ENCODE measurements at regions of chr10 and their contacts with region 1.

Region 1: GRCh38 chr10:132023092-132023811 is 41.5 kb upstream of the BNIP3 start:
- DNase-seq: peak; percentile 73 to 94
- H3K4me3 ChIP-seq: no peak overlapping the region
- H3K27ac ChIP-seq: no peak overlapping the region
- H3K4me1 ChIP-seq: peaks cover 2 to 8% (median 3%) of the 10 kb centered on the region in 4 experiments; a peak in 5 of 7 replicates
- H3K27me3 ChIP-seq: peaks cover 0 to 8% (median 1%) of the 10 kb centered on the region in 4 experiments; a peak in 3 of 7 replicates
- CTCF ChIP-seq: peak; percentile 85 to 93 (median 89)
- EP300 ChIP-seq: no peak
- POLR2A ChIP-seq: no peak
- RAD21 ChIP-seq: peak; percentile 93 to 95

Region 2: DNA sequence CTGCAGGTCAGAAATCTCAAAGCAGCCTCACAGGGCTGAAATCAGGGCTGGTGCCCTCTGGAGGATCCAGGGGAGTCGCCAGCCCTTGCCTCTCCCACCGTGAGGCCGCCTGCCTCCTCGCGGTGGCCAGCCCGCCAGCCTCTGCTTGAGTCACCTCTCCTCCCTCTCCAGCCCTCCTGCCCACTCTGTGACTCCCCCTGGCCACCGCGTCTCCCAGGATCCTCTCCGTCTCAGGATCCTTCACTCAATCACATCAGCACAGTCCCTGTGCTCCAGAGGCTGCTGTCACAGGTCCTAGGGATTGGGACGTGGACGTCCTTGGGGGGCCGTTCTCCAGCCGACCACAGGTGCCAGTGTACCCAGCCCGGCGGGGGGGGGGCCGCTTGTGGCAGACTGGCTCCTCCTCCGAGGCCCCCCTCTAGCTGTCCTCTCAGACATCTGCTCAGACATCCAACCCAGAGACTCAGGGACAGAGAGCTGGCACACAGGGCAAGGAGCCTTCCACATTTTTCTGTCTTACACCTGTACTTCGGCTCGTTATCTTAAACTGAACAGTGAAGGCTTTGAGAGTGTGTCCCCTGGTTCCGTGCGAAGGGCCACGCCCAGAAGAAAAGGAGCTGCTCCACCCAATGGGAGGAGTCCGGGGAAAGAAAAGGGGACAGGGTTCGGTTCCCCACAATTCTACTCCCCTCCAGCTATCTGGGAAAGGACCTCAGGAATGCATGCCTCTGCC is 131.9 kb before region 1 on chr10:
- CTCF ChIA-PET with region 1: interaction called, 11 read pairs
- POLR2A ChIA-PET with region 1: interaction called, 4 read pairs
- DNase-seq: peak; percentile 15 to 76
- H3K4me3 ChIP-seq: peak overlapping the region in 1 of 4 experiments; percentile 41; a peak in 2 of 8 replicates
- H3K27ac ChIP-seq: no peak overlapping the region
- H3K4me1 ChIP-seq: peaks cover 0 to 7% (median 4%) of the 10 kb centered on the region in 4 experiments; a peak in 5 of 7 replicates
- H3K27me3 ChIP-seq: peaks cover 0 to 3% (median 0%) of the 10 kb centered on the region in 4 experiments; a peak in 1 of 7 replicates
- CTCF ChIP-seq: peak; percentile 36 to 67 (median 65)
- EP300 ChIP-seq: no peak
- POLR2A ChIP-seq: no peak
- RAD21 ChIP-seq: no peak; a peak in 1 of 4 replicates

Region 3: DNA sequence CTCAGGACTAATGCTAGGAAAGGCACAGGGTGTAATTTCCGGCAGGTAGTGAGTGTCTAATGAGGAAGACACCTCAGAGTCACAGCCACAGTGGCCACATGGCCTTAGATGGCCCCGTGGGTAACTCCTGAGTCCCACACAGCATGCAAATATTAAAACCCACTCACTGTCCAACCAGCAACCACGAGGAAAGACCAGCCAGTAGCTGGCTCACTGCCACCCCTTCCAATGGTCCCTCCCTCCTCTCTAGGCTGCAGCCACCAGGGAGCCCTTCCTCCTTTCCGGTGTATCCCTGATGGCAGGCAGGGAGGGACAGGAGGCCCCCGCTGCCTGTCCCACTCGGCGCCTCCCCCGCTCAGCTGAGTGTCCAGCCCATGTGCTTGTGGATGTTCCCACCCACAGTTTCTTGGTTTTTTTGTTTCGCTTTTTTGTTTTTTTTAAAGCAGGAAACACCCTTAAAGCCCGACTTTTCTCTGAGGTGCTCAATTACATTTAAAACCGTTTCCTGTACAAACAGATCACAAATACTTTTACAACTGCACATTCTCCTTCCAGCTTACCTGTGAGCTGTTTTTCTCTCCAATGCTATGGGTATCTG is 50.7 kb before region 1 on chr10:
- CTCF ChIA-PET with region 1: interaction called, 16 read pairs
- POLR2A ChIA-PET with region 1: interaction called, 3 read pairs
- DNase-seq: no peak
- H3K4me3 ChIP-seq: no peak overlapping the region
- H3K27ac ChIP-seq: no peak overlapping the region
- H3K4me1 ChIP-seq: 0 out of 7 replicates have a peak, but pooled peaks cover 0 to under 1% (median 0%) of the 10 kb centered on the region in 4 experiments
- H3K27me3 ChIP-seq: no peaks in the 10 kb centered on the region; a peak in 1 of 7 replicates
- CTCF ChIP-seq: no peak
- EP300 ChIP-seq: no peak
- POLR2A ChIP-seq: no peak
- RAD21 ChIP-seq: no peak

Region 4: DNA sequence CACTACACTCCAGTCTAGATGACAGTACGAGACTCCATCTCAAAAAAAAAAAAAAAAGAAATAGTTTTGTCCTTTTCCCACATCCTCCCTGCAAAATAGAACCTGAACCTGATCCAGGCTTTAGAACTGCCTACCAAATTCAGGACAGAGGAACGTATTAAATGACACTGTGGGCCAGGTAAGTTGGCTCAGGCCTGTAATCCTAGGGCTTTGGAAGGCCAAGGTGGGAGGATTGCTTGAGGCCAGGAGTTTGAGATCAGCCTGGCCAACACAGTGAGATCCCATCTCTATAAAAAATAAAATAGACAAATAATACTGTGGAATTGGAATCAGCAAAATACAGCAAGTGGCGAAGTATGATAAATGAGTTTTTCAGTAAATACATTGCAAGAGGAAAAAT is 31.5 kb before region 1 on chr10:
- CTCF ChIA-PET with region 1: interaction called, 86 read pairs
- POLR2A ChIA-PET with region 1: interaction called, 5 read pairs
- DNase-seq: no peak
- H3K4me3 ChIP-seq: no peak overlapping the region
- H3K27ac ChIP-seq: no peak overlapping the region
- H3K4me1 ChIP-seq: no peaks in the 10 kb centered on the region; a peak in 2 of 7 replicates
- H3K27me3 ChIP-seq: no peaks in the 10 kb centered on the region
- CTCF ChIP-seq: no peak
- EP300 ChIP-seq: no peak
- POLR2A ChIP-seq: no peak
- RAD21 ChIP-seq: no peak

Region 5: GRCh38 chr10:132011024-132011423 is 12.2 kb before region 1 on chr10:
- CTCF ChIA-PET with region 1: interaction called, 59 read pairs
- POLR2A ChIA-PET with region 1: interaction called, 7 read pairs
- DNase-seq: no peak
- H3K4me3 ChIP-seq: no peak overlapping the region
- H3K27ac ChIP-seq: no peak overlapping the region
- H3K4me1 ChIP-seq: peaks cover 5 to 25% (median 16%) of the 10 kb centered on the region in 4 experiments
- H3K27me3 ChIP-seq: no peaks in the 10 kb centered on the region
- CTCF ChIP-seq: no peak
- EP300 ChIP-seq: no peak
- POLR2A ChIP-seq: no peak
- RAD21 ChIP-seq: no peak

Region 6: DNA sequence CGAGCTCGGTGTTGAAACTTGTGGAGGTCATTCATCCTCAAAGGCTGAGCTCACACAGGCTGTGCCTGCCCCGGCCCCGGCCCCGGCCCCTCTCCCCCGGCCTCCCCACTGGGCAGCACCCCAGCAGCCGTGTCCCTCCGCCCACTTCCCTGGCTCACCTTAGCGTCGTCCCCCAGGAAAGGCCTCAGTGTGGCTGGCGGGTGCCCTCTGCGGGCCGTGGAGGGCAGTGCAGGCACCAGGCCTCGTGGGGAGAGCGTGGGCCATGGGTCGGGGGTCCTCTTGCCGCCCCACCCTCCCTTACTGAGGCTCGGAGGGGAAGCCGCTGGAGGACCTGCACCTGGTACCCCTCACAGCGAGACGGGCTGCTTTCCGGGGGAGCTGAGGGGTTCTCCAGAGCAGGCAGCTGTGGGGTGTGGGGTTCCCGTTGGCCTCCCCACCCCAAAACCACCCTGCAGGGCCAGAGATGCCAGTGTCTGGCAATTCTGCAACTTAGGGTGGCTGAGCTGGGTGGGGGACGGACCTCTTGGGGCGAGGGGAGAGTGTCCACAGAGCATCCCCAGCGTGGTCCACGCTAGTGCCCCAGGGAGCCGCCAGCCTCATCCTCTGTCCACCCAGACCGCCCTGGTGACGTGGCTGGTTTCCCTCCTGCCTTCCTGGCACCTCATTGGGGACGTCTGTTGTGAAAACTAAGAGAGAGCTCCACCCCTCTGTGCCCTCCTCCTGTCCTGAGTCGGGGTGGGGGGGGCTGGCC is 119.3 kb after region 1 on chr10:
- CTCF ChIA-PET with region 1: interaction called, 10 read pairs
- POLR2A ChIA-PET with region 1: no interaction called
- DNase-seq: peak in 1 of 2 experiments; percentile 86
- H3K4me3 ChIP-seq: no peak overlapping the region
- H3K27ac ChIP-seq: no peak overlapping the region
- H3K4me1 ChIP-seq: peaks cover 0 to 9% (median 2%) of the 10 kb centered on the region in 4 experiments; a peak in 2 of 7 replicates
- H3K27me3 ChIP-seq: no peaks in the 10 kb centered on the region
- CTCF ChIP-seq: peak; percentile 79 to 94 (median 84)
- EP300 ChIP-seq: no peak
- POLR2A ChIP-seq: no peak
- RAD21 ChIP-seq: peak; percentile 83 to 89